Right ventricle myocardium inferior (tissue), 1 donor: ENCODE measurements at regions of chr11 and their contacts with region 1.

Region 1: GRCh38 chr11:68127714-68128681 is 6.8 kb upstream of the CHKA start:
- DNase-seq: peak; percentile 75
- ATAC-seq: peak; percentile 73

Region 2: DNA sequence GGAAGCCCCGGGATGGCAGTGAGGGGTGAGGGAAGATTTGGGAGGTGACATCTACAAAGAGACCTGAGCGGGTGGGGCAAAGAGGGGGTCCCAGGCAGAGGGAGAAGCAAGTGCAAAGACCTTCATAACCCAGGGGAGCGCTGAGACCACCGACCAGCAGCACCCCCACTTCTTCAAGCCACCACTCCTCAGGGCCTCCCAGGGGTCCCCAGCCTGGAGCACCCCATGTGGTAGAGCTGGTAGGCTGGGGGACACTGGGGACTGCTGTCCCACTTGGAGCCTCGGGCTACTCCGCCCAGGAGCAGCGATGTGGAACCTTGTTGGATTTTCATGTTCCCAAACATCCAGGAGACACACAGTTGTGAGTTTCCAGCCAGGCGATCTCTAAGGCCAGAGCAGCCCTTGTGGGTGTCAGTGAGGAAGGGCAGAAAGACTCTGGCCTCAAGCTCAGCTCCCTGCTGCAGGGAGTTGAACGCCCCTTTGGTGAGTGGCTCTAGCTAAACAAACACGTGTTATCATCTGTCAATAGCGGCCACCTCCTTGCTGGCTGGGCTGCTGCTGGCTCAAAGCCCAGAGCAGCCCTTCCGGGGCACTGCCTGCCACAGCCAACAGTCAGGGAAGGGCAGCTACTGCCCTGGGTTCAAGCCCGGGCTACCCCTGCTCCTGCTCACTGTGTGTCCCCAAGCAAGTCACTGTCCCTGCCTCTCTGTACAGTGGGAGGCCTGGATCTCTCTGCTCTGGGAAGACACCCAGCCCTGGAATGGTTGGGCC is 18.9 kb after region 1 on chr11:
- intact Hi-C with region 1: loop called (anchors 2 kb)
- DNase-seq: no peak
- ATAC-seq: peak; percentile 51